ENCODE measurements at regions of chr3 and their contacts with region 1.

Region 1: DNA sequence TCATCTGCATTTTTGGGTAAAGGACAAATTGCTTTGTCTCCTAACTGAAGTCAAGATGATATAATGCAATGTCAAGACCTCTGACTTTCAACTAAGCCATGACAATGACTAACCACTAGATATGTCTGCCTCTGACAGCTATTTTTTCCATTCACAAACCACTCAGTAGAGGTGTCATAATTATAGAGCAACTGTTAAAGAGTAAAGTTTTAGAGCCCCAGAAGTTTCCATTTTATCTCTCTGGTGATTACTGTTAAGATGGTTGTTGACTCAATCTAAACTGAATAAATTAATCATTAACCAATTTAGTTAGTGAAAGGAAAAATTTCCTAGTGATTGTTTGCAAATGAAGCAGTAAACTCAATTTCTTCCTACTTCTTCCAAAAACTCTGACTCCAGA is 779.9 kb downstream of the GRM7 start:
- DNase-seq: no peak
- ATAC-seq: no peak
- H3K4me3 ChIP-seq: no peak overlapping the region
- H3K27ac ChIP-seq: no peak overlapping the region
- H3K4me1 ChIP-seq: no peaks in the 10 kb centered on the region
- H3K27me3 ChIP-seq: no peaks in the 10 kb centered on the region
- CTCF ChIP-seq: no peak

Region 2: GRCh38 chr3:8301728-8302462 is 661.1 kb after region 1 on chr3:
- CTCF ChIA-PET with region 1: no interaction called
- POLR2A ChIA-PET with region 1: interaction called, 10 read pairs
- in situ Hi-C with region 1: no loop called
- intact Hi-C with region 1: no loop called
- DNase-seq: peak; percentile 8
- ATAC-seq: 0 out of 2 replicates have a peak, but pooled peaks have one; percentile 60
- H3K4me3 ChIP-seq: no peak overlapping the region
- H3K27ac ChIP-seq: no peak overlapping the region
- H3K4me1 ChIP-seq: no peaks in the 10 kb centered on the region
- H3K27me3 ChIP-seq: no peaks in the 10 kb centered on the region
- CTCF ChIP-seq: peak; percentile 71